ENCODE measurements at regions of chr12 and their contacts with region 1.

Region 1: DNA sequence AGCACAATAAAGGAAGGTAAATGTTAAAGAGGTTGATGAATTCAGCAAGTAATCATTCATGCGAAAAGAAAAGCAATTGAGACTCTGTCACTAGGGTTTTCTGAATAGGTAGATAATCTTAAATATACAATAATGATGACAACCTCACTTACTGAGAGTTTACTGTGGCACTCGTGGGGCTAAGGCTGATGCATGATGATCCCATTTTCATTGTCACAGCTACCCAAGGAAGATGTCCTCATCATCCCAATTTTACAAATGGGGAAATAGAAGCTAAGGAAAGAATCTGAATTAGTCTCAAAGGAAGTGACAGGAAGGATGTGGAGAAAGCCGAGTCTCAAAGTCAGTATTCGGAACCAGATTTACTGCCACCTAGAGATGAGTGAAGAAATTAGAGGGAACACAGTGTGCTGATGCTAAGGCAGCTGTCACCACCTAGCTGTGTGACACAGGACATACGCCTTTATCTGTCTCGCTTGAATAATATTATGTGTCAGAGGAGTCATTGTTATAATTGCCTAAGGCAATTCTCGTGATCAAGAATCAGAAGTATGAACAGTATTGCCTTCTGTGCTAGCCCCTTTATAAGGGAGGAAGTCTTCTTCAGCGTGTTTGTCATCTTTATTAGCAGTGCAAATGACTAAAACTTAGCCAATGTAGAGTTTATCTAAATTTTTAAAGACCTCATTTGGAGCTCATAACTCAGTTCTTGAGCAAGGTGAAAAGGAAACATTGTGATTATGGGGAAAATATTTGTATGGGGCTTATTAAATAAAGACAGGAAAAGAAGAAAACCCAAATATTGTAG is 63.2 kb downstream of the ERGIC2 start:
- DNase-seq: peak in 32 of 35 experiments; percentile 8 to 76 (median 29)
- ATAC-seq: peak; percentile 96 to 100 (median 98)
- H3K4me3 ChIP-seq: no peak overlapping the region
- H3K4me3 Mint-ChIP-seq: no peak overlapping the region
- H3K27ac ChIP-seq: no peak overlapping the region
- H3K27ac Mint-ChIP-seq: peak overlapping the region in 1 of 2 donors; percentile 47
- H3K4me1 ChIP-seq: no peaks in the 10 kb centered on the region
- H3K4me1 Mint-ChIP-seq: peaks cover 8 to 11% (median 10%) of the 10 kb centered on the region in 3 donors
- H3K27me3 ChIP-seq: no peaks in the 10 kb centered on the region
- H3K27me3 Mint-ChIP-seq: no peaks in the 10 kb centered on the region

Region 2: DNA sequence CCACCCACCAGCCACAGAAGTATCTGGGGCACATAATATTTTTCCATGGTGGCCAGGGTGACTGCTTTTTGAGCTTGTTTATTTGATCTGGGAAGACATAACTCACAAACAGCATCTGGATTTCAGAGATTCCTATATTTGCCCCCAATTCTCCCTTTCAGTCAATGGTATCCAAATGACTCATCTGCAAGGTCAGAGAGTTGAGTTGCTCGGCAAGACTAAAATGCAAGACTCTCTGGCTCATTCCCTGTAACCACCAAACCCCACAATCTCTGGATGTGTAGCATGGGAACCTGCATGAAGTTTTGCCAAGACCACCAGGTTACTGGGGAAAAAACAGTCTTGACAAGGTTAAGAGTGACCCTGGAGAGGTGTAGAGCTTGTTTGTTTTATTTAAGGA is 343.6 kb before region 1 on chr12:
- CTCF ChIA-PET with region 1: interaction called in 1 of 2 experiments, 10 read pairs
- POLR2A ChIA-PET with region 1: no interaction called
- DNase-seq: no peak
- ATAC-seq: no peak
- H3K4me3 ChIP-seq: no peak overlapping the region
- H3K4me3 Mint-ChIP-seq: no peak overlapping the region
- H3K27ac ChIP-seq: no peak overlapping the region
- H3K27ac Mint-ChIP-seq: no peak overlapping the region
- H3K4me1 ChIP-seq: no peaks in the 10 kb centered on the region
- H3K4me1 Mint-ChIP-seq: no peaks in the 10 kb centered on the region
- H3K27me3 ChIP-seq: peaks cover 0 to 2% of the 10 kb centered on the region in 2 experiments
- H3K27me3 Mint-ChIP-seq: peaks cover 5 to 26% of the 10 kb centered on the region in 2 donors

Region 3: GRCh38 chr12:29073628-29074239 is 244.0 kb before region 1 on chr12:
- CTCF ChIA-PET with region 1: interaction called, 24 to 42 read pairs
- POLR2A ChIA-PET with region 1: interaction called in 1 of 2 experiments, 3 read pairs
- DNase-seq: peak in 8 of 35 experiments; percentile 1 to 58 (median 8)
- ATAC-seq: peak in 3 of 4 experiments; percentile 37 to 61 (median 51)
- H3K4me3 ChIP-seq: no peak overlapping the region
- H3K4me3 Mint-ChIP-seq: no peak overlapping the region
- H3K27ac ChIP-seq: no peak overlapping the region
- H3K27ac Mint-ChIP-seq: no peak overlapping the region
- H3K4me1 ChIP-seq: no peaks in the 10 kb centered on the region
- H3K4me1 Mint-ChIP-seq: no peaks in the 10 kb centered on the region
- H3K27me3 ChIP-seq: peaks cover 0 to 4% of the 10 kb centered on the region in 2 experiments
- H3K27me3 Mint-ChIP-seq: peaks cover 12 to 13% of the 10 kb centered on the region in 2 donors

Region 4: DNA sequence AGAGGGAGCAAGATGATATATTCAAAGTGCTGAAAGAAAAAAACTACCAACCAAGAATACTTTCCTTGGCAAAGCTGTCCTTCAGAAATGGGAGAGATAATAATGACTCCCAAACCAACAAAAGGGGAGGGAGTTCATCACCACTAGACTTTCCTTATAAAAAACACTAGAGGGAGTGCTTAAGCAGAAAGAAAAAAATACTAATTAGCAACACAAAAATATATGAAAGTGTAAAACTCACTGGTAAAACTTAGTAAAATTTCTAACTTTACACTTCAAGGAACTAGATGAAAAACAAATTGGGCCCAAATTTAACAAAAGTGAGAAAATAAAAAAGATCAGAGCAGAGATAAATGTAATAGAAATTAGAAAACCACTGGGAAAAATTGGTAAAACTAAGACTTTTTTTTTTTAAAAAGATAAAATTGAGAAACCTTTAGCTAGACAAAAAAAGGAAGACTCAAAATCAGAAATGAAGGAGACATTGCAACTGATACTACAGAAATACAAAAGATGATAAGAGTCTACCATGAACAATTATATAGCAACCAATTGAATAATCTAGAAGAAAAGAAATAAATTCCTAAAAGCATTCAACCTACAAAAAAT is 229.0 kb before region 1 on chr12:
- CTCF ChIA-PET with region 1: interaction called, 37 to 42 read pairs
- POLR2A ChIA-PET with region 1: no interaction called
- DNase-seq: peak in 1 of 35 experiments; percentile 31
- ATAC-seq: peak in 1 of 4 experiments; percentile 46
- H3K4me3 ChIP-seq: no peak overlapping the region
- H3K4me3 Mint-ChIP-seq: no peak overlapping the region
- H3K27ac ChIP-seq: no peak overlapping the region
- H3K27ac Mint-ChIP-seq: no peak overlapping the region
- H3K4me1 ChIP-seq: no peaks in the 10 kb centered on the region
- H3K4me1 Mint-ChIP-seq: peaks cover 0 to 5% (median 4%) of the 10 kb centered on the region in 3 donors
- H3K27me3 ChIP-seq: no peaks in the 10 kb centered on the region
- H3K27me3 Mint-ChIP-seq: peaks cover 0 to 2% of the 10 kb centered on the region in 2 donors

Region 5: GRCh38 chr12:29306682-29307081 is 11.1 kb before region 1 on chr12:
- CTCF ChIA-PET with region 1: interaction called, 5 to 11 read pairs
- POLR2A ChIA-PET with region 1: interaction called in 1 of 2 experiments, 3 read pairs
- DNase-seq: no peak
- ATAC-seq: no peak
- H3K4me3 ChIP-seq: no peak overlapping the region
- H3K4me3 Mint-ChIP-seq: no peak overlapping the region
- H3K27ac ChIP-seq: no peak overlapping the region
- H3K27ac Mint-ChIP-seq: no peak overlapping the region
- H3K4me1 ChIP-seq: no peaks in the 10 kb centered on the region
- H3K4me1 Mint-ChIP-seq: no peaks in the 10 kb centered on the region
- H3K27me3 ChIP-seq: no peaks in the 10 kb centered on the region
- H3K27me3 Mint-ChIP-seq: no peaks in the 10 kb centered on the region